Heart right ventricle (tissue), 16 donors: ENCODE measurements at regions of chr6 and their contacts with region 1.

Region 1: GRCh38 chr6:27753668-27754407 is 158.4 kb downstream of the OR2B2 start:
- DNase-seq: peak; percentile 52 to 53
- ATAC-seq: peak in 3 of 8 donors; percentile 40 to 71 (median 65)
- H3K4me3 ChIP-seq: peak overlapping the region in 9 of 10 donors; percentile 34 to 86 (median 71)
- H3K27ac ChIP-seq: no peak overlapping the region
- H3K4me1 ChIP-seq: peaks cover 0 to 17% (median 5%) of the 10 kb centered on the region in 9 donors
- H3K27me3 ChIP-seq: peaks cover 6 to 39% (median 32%) of the 10 kb centered on the region in 7 donors
- CTCF ChIP-seq: no peak

Region 2: GRCh38 chr6:27157459-27158315 is 596.2 kb before region 1 on chr6:
- intact Hi-C with region 1: loop called in 1 of 10 experiments (anchors 5 kb)
- DNase-seq: peak; percentile 62 to 65
- ATAC-seq: peak in 7 of 8 donors; percentile 64 to 92 (median 80)
- H3K4me3 ChIP-seq: peak overlapping the region; percentile 5 to 54 (median 44)
- H3K27ac ChIP-seq: peak overlapping the region in 1 of 10 donors; percentile 11
- H3K4me1 ChIP-seq: peaks cover 0 to 17% (median 9%) of the 10 kb centered on the region in 9 donors
- H3K27me3 ChIP-seq: peaks cover 0 to 18% (median 0%) of the 10 kb centered on the region in 7 donors
- CTCF ChIP-seq: peak in 8 of 9 donors; percentile 7 to 75 (median 60)

Region 3: GRCh38 chr6:27177485-27178406 is 576.1 kb before region 1 on chr6:
- intact Hi-C with region 1: loop called in 3 of 10 experiments (anchors 10 kb)
- DNase-seq: peak; percentile 62 to 65
- ATAC-seq: peak; percentile 73 to 94 (median 86)
- H3K4me3 ChIP-seq: peak overlapping the region; percentile 73 to 100 (median 87)
- H3K27ac ChIP-seq: peak overlapping the region in 9 of 10 donors; percentile 23 to 84 (median 61)
- H3K4me1 ChIP-seq: peaks cover 0 to 20% (median 7%) of the 10 kb centered on the region in 9 donors
- H3K27me3 ChIP-seq: peaks cover 0 to 16% (median 8%) of the 10 kb centered on the region in 7 donors
- CTCF ChIP-seq: peak in 7 of 9 donors; percentile 19 to 62 (median 48)

Region 4: GRCh38 chr6:27188885-27189418 is 564.9 kb before region 1 on chr6:
- intact Hi-C with region 1: loop called in 3 of 10 experiments (anchors 5 to 10 kb)
- DNase-seq: peak in 1 of 2 donors; percentile 59
- ATAC-seq: peak; percentile 88 to 97 (median 93)
- H3K4me3 ChIP-seq: peak overlapping the region; percentile 38 to 73 (median 64)
- H3K27ac ChIP-seq: peak overlapping the region in 9 of 10 donors; percentile 49 to 80 (median 63)
- H3K4me1 ChIP-seq: peaks cover 0 to 12% (median 4%) of the 10 kb centered on the region in 9 donors
- H3K27me3 ChIP-seq: peaks cover 0 to 10% (median 0%) of the 10 kb centered on the region in 7 donors
- CTCF ChIP-seq: peak; percentile 70 to 87 (median 79)

Region 5: GRCh38 chr6:27479319-27480182 is 274.3 kb before region 1 on chr6:
- intact Hi-C with region 1: loop called in 1 of 10 experiments (anchors 1 kb)
- DNase-seq: peak; percentile 76 to 79
- ATAC-seq: peak; percentile 93 to 97 (median 95)
- H3K4me3 ChIP-seq: peak overlapping the region; percentile 51 to 85 (median 72)
- H3K27ac ChIP-seq: peak overlapping the region; percentile 86 to 97 (median 96)
- H3K4me1 ChIP-seq: peaks cover 0 to 21% (median 8%) of the 10 kb centered on the region in 9 donors
- H3K27me3 ChIP-seq: no peaks in the 10 kb centered on the region
- CTCF ChIP-seq: no peak

Region 6: GRCh38 chr6:27503436-27504030 is 250.3 kb before region 1 on chr6:
- intact Hi-C with region 1: no loop called
- DNase-seq: peak; percentile 54 to 64
- ATAC-seq: peak; percentile 76 to 91 (median 89)
- H3K4me3 ChIP-seq: peak overlapping the region; percentile 5 to 60 (median 51)
- H3K27ac ChIP-seq: no peak overlapping the region
- H3K4me1 ChIP-seq: peaks cover 0 to 17% (median 9%) of the 10 kb centered on the region in 9 donors
- H3K27me3 ChIP-seq: peaks cover 0 to 42% (median 18%) of the 10 kb centered on the region in 7 donors
- CTCF ChIP-seq: no peak

Region 7: GRCh38 chr6:27518881-27519795 is 234.7 kb before region 1 on chr6:
- intact Hi-C with region 1: loop called in 9 of 10 experiments (anchors 1 to 10 kb)
- DNase-seq: peak; percentile 43 to 55
- ATAC-seq: peak; percentile 87 to 97 (median 94)
- H3K4me3 ChIP-seq: peak overlapping the region; percentile 52 to 94 (median 72)
- H3K27ac ChIP-seq: peak overlapping the region; percentile 27 to 89 (median 81)
- H3K4me1 ChIP-seq: peaks cover 0 to 12% (median 7%) of the 10 kb centered on the region in 9 donors
- H3K27me3 ChIP-seq: peaks cover 0 to 29% (median 22%) of the 10 kb centered on the region in 7 donors
- CTCF ChIP-seq: peak; percentile 49 to 80 (median 65)

Region 8: GRCh38 chr6:27795697-27796494 is 42.1 kb after region 1 on chr6:
- intact Hi-C with region 1: no loop called
- DNase-seq: peak in 1 of 2 donors; percentile 73
- ATAC-seq: peak; percentile 24 to 84 (median 71)
- H3K4me3 ChIP-seq: no peak overlapping the region
- H3K27ac ChIP-seq: no peak overlapping the region
- H3K4me1 ChIP-seq: peaks cover 0 to 26% (median 10%) of the 10 kb centered on the region in 9 donors
- H3K27me3 ChIP-seq: peaks cover 0 to 42% (median 14%) of the 10 kb centered on the region in 7 donors
- CTCF ChIP-seq: peak; percentile 59 to 84 (median 82)

Region 9: DNA sequence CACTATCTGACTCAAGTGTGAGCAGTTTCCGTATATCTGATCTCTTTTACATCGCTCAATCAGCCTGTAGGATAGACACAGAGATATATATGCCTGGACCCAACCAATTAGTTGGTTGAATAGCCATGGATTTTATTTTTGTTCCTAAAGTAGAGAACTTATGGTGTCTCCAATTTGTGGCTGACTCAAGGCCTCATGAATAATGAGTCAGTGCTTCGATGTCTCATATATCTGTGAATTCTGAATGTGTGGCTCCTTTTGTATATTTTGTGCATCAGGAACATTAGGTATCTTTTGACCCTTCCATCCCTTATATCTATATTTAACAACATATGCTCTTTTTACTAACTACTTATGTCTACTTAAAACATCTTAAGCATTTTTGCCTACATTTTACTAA is 93.9 kb after region 1 on chr6:
- intact Hi-C with region 1: no loop called
- DNase-seq: no peak
- ATAC-seq: no peak
- H3K4me3 ChIP-seq: no peak overlapping the region
- H3K27ac ChIP-seq: no peak overlapping the region
- H3K4me1 ChIP-seq: no peaks in the 10 kb centered on the region
- H3K27me3 ChIP-seq: no peaks in the 10 kb centered on the region
- CTCF ChIP-seq: no peak

Region 10: GRCh38 chr6:27902335-27903314 is 148.8 kb after region 1 on chr6:
- intact Hi-C with region 1: loop called in 3 of 10 experiments (anchors 2 to 5 kb)
- DNase-seq: peak; percentile 76 to 90
- ATAC-seq: peak; percentile 93 to 99 (median 96)
- H3K4me3 ChIP-seq: peak overlapping the region; percentile 31 to 64 (median 58)
- H3K27ac ChIP-seq: peak overlapping the region in 9 of 10 donors; percentile 12 to 79 (median 68)
- H3K4me1 ChIP-seq: peaks cover 0 to 13% (median 0%) of the 10 kb centered on the region in 9 donors
- H3K27me3 ChIP-seq: peaks cover 0 to 4% (median 0%) of the 10 kb centered on the region in 7 donors
- CTCF ChIP-seq: no peak

Region 11: GRCh38 chr6:27940766-27941165 is 186.9 kb after region 1 on chr6:
- intact Hi-C with region 1: no loop called
- DNase-seq: no peak
- ATAC-seq: no peak
- H3K4me3 ChIP-seq: no peak overlapping the region
- H3K27ac ChIP-seq: no peak overlapping the region
- H3K4me1 ChIP-seq: no peaks in the 10 kb centered on the region
- H3K27me3 ChIP-seq: peaks cover 0 to 30% (median 14%) of the 10 kb centered on the region in 7 donors
- CTCF ChIP-seq: no peak